PC-3 (cell line): ENCODE measurements at regions of chr3 and their contacts with region 1.

Region 1: DNA sequence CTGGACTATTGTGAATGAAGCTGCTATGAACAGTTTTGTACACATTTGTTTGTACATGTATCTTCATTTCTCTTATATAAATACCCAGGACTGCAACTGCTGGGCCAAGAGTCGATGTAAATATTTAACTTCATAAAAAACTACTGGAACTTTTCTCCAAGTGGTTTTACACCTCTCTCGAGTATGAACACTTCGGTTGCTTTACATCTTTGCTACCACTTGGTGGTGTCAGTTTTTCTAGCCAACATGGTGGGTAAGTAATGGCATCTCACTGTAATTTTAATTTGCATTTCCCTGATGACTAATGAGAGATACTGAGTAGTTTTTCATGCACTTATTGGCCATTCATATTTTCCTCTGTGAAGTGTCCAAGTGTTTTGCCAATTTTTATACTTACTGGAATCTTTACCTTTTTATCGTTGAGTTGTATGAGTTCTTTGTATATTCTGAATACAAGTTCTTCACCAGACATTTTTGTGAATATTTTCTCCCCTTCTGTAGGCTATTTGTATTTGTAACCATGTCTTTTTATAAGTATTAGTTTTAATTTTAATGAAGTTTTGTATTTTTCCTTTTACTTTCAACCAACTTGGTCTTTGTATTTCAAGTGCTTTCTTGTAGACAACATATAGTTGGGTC is 44.4 kb downstream of the PCOLCE2 start:
- DNase-seq: peak; percentile 66
- ATAC-seq: peak; percentile 74
- H3K4me3 ChIP-seq: no peak overlapping the region
- H3K27ac ChIP-seq: no peak overlapping the region
- H3K4me1 ChIP-seq: peaks cover 5% of the 10 kb centered on the region
- H3K27me3 ChIP-seq: no peaks in the 10 kb centered on the region
- CTCF ChIP-seq: peak; percentile 70

Region 2: GRCh38 chr3:142888481-142889211 is 44.2 kb after region 1 on chr3 and contains the start of gene PCOLCE2:
- CTCF ChIA-PET with region 1: no interaction called
- POLR2A ChIA-PET with region 1: no interaction called
- intact Hi-C with region 1: loop called (anchors 2 kb)
- DNase-seq: peak; percentile 37
- ATAC-seq: peak; percentile 62
- H3K4me3 ChIP-seq: peak within 1 kb of the TSS; percentile 78
- H3K27ac ChIP-seq: peak within 1 kb of the TSS; percentile 43
- H3K4me1 ChIP-seq: peaks cover 17% of the 10 kb centered on the region
- H3K27me3 ChIP-seq: no peaks in the 10 kb centered on the region
- CTCF ChIP-seq: 0 out of 2 replicates have a peak, but pooled peaks have one; percentile 13
- total RNA-seq, gene PCOLCE2: 17.3 and 23.9 TPM in 2 replicates